Left lung (tissue), 14 donors: ENCODE measurements at regions of chr3 and their contacts with region 1.

Region 1: GRCh38 chr3:138347960-138348753 is at the start of gene MRAS:
- DNase-seq: peak; percentile 68 to 93 (median 77)
- ATAC-seq: peak; percentile 85
- H3K4me3 ChIP-seq: peak within 1 kb of the TSS; percentile 65 to 67
- H3K27ac ChIP-seq: peak within 1 kb of the TSS; percentile 90 to 93
- H3K4me1 ChIP-seq: peaks cover 9 to 25% of the 10 kb centered on the region in 2 donors
- H3K27me3 ChIP-seq: peaks cover 0 to 25% of the 10 kb centered on the region in 2 donors
- CTCF ChIP-seq: peak; percentile 15 to 37
- polyA plus RNA-seq, gene MRAS: 18.1 to 28.4 (median 19.2) TPM

Region 2: DNA sequence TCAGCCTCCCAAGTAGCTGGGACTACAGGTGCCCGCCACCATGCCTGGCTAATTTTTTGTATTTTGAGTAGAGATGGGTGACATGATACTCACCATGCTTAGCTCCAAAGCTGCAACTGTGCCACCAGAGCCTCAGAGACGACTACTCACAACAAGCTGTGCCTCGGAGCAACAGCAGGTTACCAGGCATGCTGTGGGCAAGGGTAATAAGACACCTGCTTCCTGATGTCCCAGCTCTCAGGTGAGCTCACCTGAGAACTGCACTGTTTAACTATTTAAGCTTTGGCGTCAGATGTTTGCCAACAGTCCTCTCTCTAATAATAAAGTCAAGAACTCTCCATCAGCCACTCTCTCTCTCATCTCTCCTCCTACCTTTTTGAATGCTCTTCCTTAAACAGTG is 240.1 kb before region 1 on chr3:
- intact Hi-C with region 1: no loop called
- DNase-seq: no peak
- ATAC-seq: no peak
- H3K4me3 ChIP-seq: no peak overlapping the region
- H3K27ac ChIP-seq: no peak overlapping the region
- H3K4me1 ChIP-seq: no peaks in the 10 kb centered on the region
- H3K27me3 ChIP-seq: no peaks in the 10 kb centered on the region
- CTCF ChIP-seq: no peak

Region 3: GRCh38 chr3:138417559-138417982 is 69.4 kb after region 1 on chr3:
- intact Hi-C with region 1: loop called in 1 of 2 experiments (anchors 10 kb)
- DNase-seq: peak; percentile 61 to 88 (median 79)
- ATAC-seq: peak; percentile 98
- H3K4me3 ChIP-seq: no peak overlapping the region
- H3K27ac ChIP-seq: no peak overlapping the region
- H3K4me1 ChIP-seq: peaks cover 0 to 6% of the 10 kb centered on the region in 2 donors
- H3K27me3 ChIP-seq: no peaks in the 10 kb centered on the region
- CTCF ChIP-seq: peak; percentile 92 to 94